Naive thymus-derived CD4-positive, alpha-beta T cell (primary cell): ENCODE measurements at regions of chr3 and their contacts with region 1.

Region 1: GRCh38 chr3:51982782-51983577 is at the start of gene ACY1:
- DNase-seq: peak; percentile 48 to 86 (median 56)
- ATAC-seq: peak; percentile 85
- H3K4me3 ChIP-seq: peak within 1 kb of the TSS; percentile 77
- H3K4me3 Mint-ChIP-seq: peak within 1 kb of the TSS; percentile 83 to 99 (median 94)
- H3K27ac ChIP-seq: peak within 1 kb of the TSS; percentile 83
- H3K27ac Mint-ChIP-seq: peak within 1 kb of the TSS; percentile 81 to 97 (median 90)
- H3K4me1 ChIP-seq: peaks cover 10 to 12% of the 10 kb centered on the region in 2 donors
- H3K4me1 Mint-ChIP-seq: peaks cover 18 to 27% (median 22%) of the 10 kb centered on the region in 7 donors
- H3K27me3 ChIP-seq: no peaks in the 10 kb centered on the region
- H3K27me3 Mint-ChIP-seq: no peaks in the 10 kb centered on the region
- total RNA-seq, gene ACY1: 7.8 to 28.3 (median 12.0) TPM

Region 2: GRCh38 chr3:51967384-51968169 is 15.4 kb before region 1 on chr3 and contains the start of gene PCBP4:
- CTCF ChIA-PET with region 1: interaction called, 5 read pairs
- POLR2A ChIA-PET with region 1: interaction called, 16 read pairs
- intact Hi-C with region 1: no loop called
- DNase-seq: peak in 5 of 9 donors; percentile 17 to 61 (median 31)
- ATAC-seq: peak; percentile 79
- H3K4me3 ChIP-seq: peak within 1 kb of the TSS; percentile 70
- H3K4me3 Mint-ChIP-seq: peak within 1 kb of the TSS; percentile 77 to 95 (median 86)
- H3K27ac ChIP-seq: peak within 1 kb of the TSS; percentile 75
- H3K27ac Mint-ChIP-seq: peak within 1 kb of the TSS; percentile 36 to 80 (median 66)
- H3K4me1 ChIP-seq: peaks cover 7 to 9% of the 10 kb centered on the region in 2 donors
- H3K4me1 Mint-ChIP-seq: peaks cover 23 to 48% (median 25%) of the 10 kb centered on the region in 7 donors
- H3K27me3 ChIP-seq: no peaks in the 10 kb centered on the region
- H3K27me3 Mint-ChIP-seq: peaks cover 0 to 10% (median 0%) of the 10 kb centered on the region in 5 donors
- total RNA-seq, gene PCBP4: 12.1 to 21.1 (median 15.0) TPM

Region 3: GRCh38 chr3:52099001-52099401 is 116.0 kb after region 1 on chr3:
- CTCF ChIA-PET with region 1: no interaction called
- POLR2A ChIA-PET with region 1: no interaction called
- intact Hi-C with region 1: no loop called
- DNase-seq: no peak
- ATAC-seq: no peak
- H3K4me3 ChIP-seq: no peak overlapping the region
- H3K4me3 Mint-ChIP-seq: no peak overlapping the region
- H3K27ac ChIP-seq: no peak overlapping the region
- H3K27ac Mint-ChIP-seq: peak overlapping the region in 1 of 9 donors; percentile 52
- H3K4me1 ChIP-seq: no peaks in the 10 kb centered on the region
- H3K4me1 Mint-ChIP-seq: peaks cover 0 to 6% (median 0%) of the 10 kb centered on the region in 7 donors
- H3K27me3 ChIP-seq: no peaks in the 10 kb centered on the region
- H3K27me3 Mint-ChIP-seq: no peaks in the 10 kb centered on the region

Region 4: GRCh38 chr3:52231502-52232293 is 248.7 kb after region 1 on chr3:
- CTCF ChIA-PET with region 1: no interaction called
- POLR2A ChIA-PET with region 1: no interaction called
- intact Hi-C with region 1: no loop called
- DNase-seq: peak; percentile 77 to 96 (median 88)
- ATAC-seq: peak; percentile 91
- H3K4me3 ChIP-seq: no peak overlapping the region
- H3K4me3 Mint-ChIP-seq: peak overlapping the region; percentile 20 to 69 (median 53)
- H3K27ac ChIP-seq: peak overlapping the region; percentile 42
- H3K27ac Mint-ChIP-seq: peak overlapping the region; percentile 32 to 88 (median 80)
- H3K4me1 ChIP-seq: peaks cover 22 to 35% of the 10 kb centered on the region in 2 donors
- H3K4me1 Mint-ChIP-seq: peaks cover 40 to 63% (median 58%) of the 10 kb centered on the region in 7 donors
- H3K27me3 ChIP-seq: no peaks in the 10 kb centered on the region
- H3K27me3 Mint-ChIP-seq: no peaks in the 10 kb centered on the region